ENCODE measurements at regions of chr11 and their contacts with region 1.

Region 1: GRCh38 chr11:62461740-62462507 is 43.1 kb downstream of the SCGB1A1 start:
- DNase-seq: peak; percentile 52 to 86 (median 62)
- ATAC-seq: peak; percentile 83
- H3K4me3 ChIP-seq: no peak overlapping the region
- H3K27ac ChIP-seq: peak overlapping the region; percentile 83
- H3K4me1 ChIP-seq: peaks cover 50 to 63% of the 10 kb centered on the region in 2 experiments
- H3K27me3 ChIP-seq: no peaks in the 10 kb centered on the region
- CTCF ChIP-seq: no peak
- EP300 ChIP-seq: peak; percentile 64; the same call in 1 of the 2 replicates
- POLR2A ChIP-seq: 0 out of 2 replicates have a peak, but pooled peaks have one; percentile 30
- RAD21 ChIP-seq: peak in 1 of 2 experiments; percentile 14; a peak in 1 of 4 replicates

Region 2: GRCh38 chr11:62444236-62444833 is 17.6 kb before region 1 on chr11:
- CTCF ChIA-PET with region 1: interaction called, 3 read pairs
- POLR2A ChIA-PET with region 1: interaction called, 18 read pairs
- in situ Hi-C with region 1: no loop called
- intact Hi-C with region 1: no loop called
- DNase-seq: no peak
- ATAC-seq: no peak
- H3K4me3 ChIP-seq: no peak overlapping the region
- H3K27ac ChIP-seq: no peak overlapping the region
- H3K4me1 ChIP-seq: peaks cover 7 to 21% of the 10 kb centered on the region in 2 experiments
- H3K27me3 ChIP-seq: no peaks in the 10 kb centered on the region; a peak in 1 of 5 replicates
- CTCF ChIP-seq: no peak
- EP300 ChIP-seq: no peak
- POLR2A ChIP-seq: no peak
- RAD21 ChIP-seq: no peak

Region 3: DNA sequence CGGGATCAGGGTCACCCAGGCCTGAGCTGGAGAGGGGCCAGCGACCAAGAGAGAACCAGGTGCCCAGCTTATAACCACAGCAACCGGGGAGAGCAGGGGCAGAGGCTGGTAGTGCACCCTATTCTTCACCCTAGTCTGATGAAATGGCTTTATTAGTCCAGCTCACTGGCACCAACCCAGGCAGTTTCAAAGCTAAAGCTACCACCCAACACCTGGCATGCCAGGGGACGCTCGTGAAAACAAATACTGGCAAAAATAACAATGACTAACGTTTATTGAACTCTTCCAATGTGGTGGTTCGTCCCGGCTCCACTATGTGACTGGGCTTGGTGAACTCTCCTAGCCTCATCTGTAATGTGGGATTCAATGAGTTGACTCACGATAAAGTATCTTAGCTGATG is 12.5 kb before region 1 on chr11:
- CTCF ChIA-PET with region 1: no interaction called
- POLR2A ChIA-PET with region 1: interaction called, 18 read pairs
- in situ Hi-C with region 1: no loop called
- intact Hi-C with region 1: no loop called
- DNase-seq: no peak
- ATAC-seq: no peak
- H3K4me3 ChIP-seq: no peak overlapping the region
- H3K27ac ChIP-seq: no peak overlapping the region
- H3K4me1 ChIP-seq: peaks cover 2 to 9% of the 10 kb centered on the region in 2 experiments; a peak in 3 of 5 replicates
- H3K27me3 ChIP-seq: no peaks in the 10 kb centered on the region; a peak in 1 of 5 replicates
- CTCF ChIP-seq: no peak
- EP300 ChIP-seq: no peak
- POLR2A ChIP-seq: no peak
- RAD21 ChIP-seq: no peak

Measured in K562 (cell line).